IMR-90 (cell line): ENCODE measurements at regions of chr9 and their contacts with region 1.

Region 1: DNA sequence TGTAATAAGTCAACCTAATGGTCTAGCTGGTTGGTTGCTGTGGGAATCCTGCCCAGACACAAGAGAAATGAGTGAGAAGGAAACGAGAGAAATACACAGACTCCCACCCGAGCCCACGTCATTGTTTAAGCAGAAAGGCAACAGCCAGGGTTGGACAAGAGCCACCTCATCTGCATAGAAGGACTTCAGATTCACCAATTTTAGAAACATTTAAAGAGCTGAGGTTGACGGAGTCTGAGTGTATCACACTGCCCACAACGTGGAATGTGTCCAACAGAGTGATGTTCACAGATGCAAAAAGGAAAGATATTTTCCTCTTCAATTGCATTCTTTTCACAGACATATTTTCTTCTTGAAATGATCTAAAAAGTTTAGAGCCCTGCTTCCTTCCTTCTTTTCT is 349.5 kb downstream of the AGTPBP1 start:
- DNase-seq: no peak
- ATAC-seq: no peak
- H3K4me3 ChIP-seq: no peak overlapping the region
- H3K27ac ChIP-seq: no peak overlapping the region
- H3K4me1 ChIP-seq: no peaks in the 10 kb centered on the region
- H3K27me3 ChIP-seq: no peaks in the 10 kb centered on the region
- CTCF ChIP-seq: no peak
- POLR2A ChIP-seq: no peak
- RAD21 ChIP-seq: no peak

Region 2: GRCh38 chr9:84819491-84819991 is 572.7 kb before region 1 on chr9:
- CTCF ChIA-PET with region 1: no interaction called
- POLR2A ChIA-PET with region 1: no interaction called
- dilution Hi-C with region 1: no loop called
- in situ Hi-C with region 1: no loop called
- intact Hi-C with region 1: no loop called
- DNase-seq: no peak
- ATAC-seq: no peak
- H3K4me3 ChIP-seq: no peak overlapping the region
- H3K27ac ChIP-seq: no peak overlapping the region
- H3K4me1 ChIP-seq: no peaks in the 10 kb centered on the region
- H3K27me3 ChIP-seq: no peaks in the 10 kb centered on the region
- CTCF ChIP-seq: no peak
- POLR2A ChIP-seq: no peak
- RAD21 ChIP-seq: no peak

Region 3: GRCh38 chr9:85368781-85369180 is 23.5 kb before region 1 on chr9:
- CTCF ChIA-PET with region 1: no interaction called
- POLR2A ChIA-PET with region 1: no interaction called
- dilution Hi-C with region 1: no loop called
- in situ Hi-C with region 1: no loop called
- intact Hi-C with region 1: loop called (anchors 1 kb)
- DNase-seq: no peak
- ATAC-seq: no peak
- H3K4me3 ChIP-seq: no peak overlapping the region
- H3K27ac ChIP-seq: no peak overlapping the region
- H3K4me1 ChIP-seq: no peaks in the 10 kb centered on the region
- H3K27me3 ChIP-seq: no peaks in the 10 kb centered on the region
- CTCF ChIP-seq: no peak
- POLR2A ChIP-seq: no peak
- RAD21 ChIP-seq: no peak